Psoas muscle (tissue), 8 donors: ENCODE measurements at regions of chr11 and their contacts with region 1.

Region 1: DNA sequence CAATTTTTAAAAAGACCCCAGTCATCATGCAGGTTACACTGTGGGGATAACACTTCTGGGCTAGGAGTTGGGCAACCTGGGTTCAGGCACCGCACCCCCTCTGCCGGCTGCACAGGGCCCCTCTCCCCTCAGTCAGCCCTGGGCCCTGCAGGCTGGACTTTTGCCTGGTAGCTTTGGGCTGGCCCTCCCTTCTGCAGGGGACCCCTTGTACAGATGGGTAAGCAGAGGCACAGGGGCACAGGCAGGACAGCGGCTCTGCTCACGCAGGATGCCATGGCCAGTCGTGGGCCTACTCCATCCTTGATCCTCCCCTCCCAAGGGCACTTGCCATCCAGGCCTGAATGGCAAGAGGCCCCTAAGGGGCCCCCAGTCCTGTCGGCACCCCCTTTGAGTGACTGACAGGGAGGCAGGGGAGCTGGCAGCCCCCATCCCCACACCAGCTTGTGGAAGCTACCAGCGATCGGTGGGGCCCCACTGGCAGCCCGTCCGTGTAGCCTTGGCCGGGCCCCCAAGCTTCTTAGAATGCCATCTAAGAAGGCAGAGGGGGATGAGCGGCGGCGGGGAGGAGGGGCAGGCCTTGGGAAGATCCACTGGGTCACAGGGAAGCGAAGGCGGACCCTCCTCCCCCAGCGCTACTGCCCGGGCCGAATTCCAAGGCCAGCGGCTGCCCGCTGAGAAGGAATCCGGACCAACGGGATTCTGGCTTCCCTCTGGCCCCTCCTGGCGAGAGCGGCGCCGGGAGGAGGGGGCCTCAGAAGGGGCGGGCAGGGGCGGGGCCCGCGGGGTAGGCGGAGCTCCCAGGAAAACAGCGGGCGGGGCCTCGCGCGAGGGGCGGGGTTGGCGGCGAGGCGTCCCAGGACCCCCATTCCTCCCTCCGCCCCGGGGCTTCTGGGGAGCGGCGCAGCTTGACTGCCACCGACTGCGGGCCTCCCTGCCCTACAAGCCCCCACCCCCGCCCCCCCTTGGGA is 6.8 kb upstream of the CHKA start:
- DNase-seq: peak; percentile 46 to 67
- ATAC-seq: peak; percentile 46 to 80 (median 64)
- H3K4me3 ChIP-seq: peak overlapping the region; percentile 77
- H3K27ac ChIP-seq: peak overlapping the region; percentile 61
- H3K4me1 ChIP-seq: peaks cover 6% of the 10 kb centered on the region
- H3K27me3 ChIP-seq: no peaks in the 10 kb centered on the region
- CTCF ChIP-seq: no peak

Region 2: GRCh38 chr11:68030318-68031138 is 97.5 kb before region 1 on chr11 and contains the start of gene NDUFS8:
- intact Hi-C with region 1: loop called in 1 of 2 experiments (anchors 5 kb)
- DNase-seq: peak; percentile 97 to 98
- ATAC-seq: peak; percentile 92 to 97 (median 93)
- H3K4me3 ChIP-seq: peak within 1 kb of the TSS; percentile 86
- H3K27ac ChIP-seq: peak within 1 kb of the TSS; percentile 89
- H3K4me1 ChIP-seq: peaks cover 23% of the 10 kb centered on the region
- H3K27me3 ChIP-seq: no peaks in the 10 kb centered on the region
- CTCF ChIP-seq: no peak
- total RNA-seq, gene NDUFS8: 204 to 328 (median 241) TPM

Region 3: GRCh38 chr11:68338051-68338780 is 210.2 kb after region 1 on chr11:
- intact Hi-C with region 1: no loop called
- DNase-seq: peak in 1 of 2 donors; percentile 60
- ATAC-seq: peak; percentile 60 to 84 (median 73)
- H3K4me3 ChIP-seq: no peak overlapping the region
- H3K27ac ChIP-seq: peak overlapping the region; percentile 36
- H3K4me1 ChIP-seq: peaks cover 39% of the 10 kb centered on the region
- H3K27me3 ChIP-seq: peaks cover 0 to 2% (median 0%) of the 10 kb centered on the region in 3 donors
- CTCF ChIP-seq: no peak